AG04449 (cell line): ENCODE measurements at regions of chr5 and their contacts with region 1.

Region 1: GRCh38 chr5:73693481-73694061 is 67.6 kb downstream of the ARHGEF28 start:
- DNase-seq: no peak
- H3K4me3 ChIP-seq: no peak overlapping the region
- CTCF ChIP-seq: peak; percentile 52

Region 2: GRCh38 chr5:73250645-73251044 is 442.9 kb before region 1 on chr5:
- CTCF ChIA-PET with region 1: no interaction called
- POLR2A ChIA-PET with region 1: no interaction called
- DNase-seq: no peak
- H3K4me3 ChIP-seq: no peak overlapping the region
- CTCF ChIP-seq: no peak

Region 3: DNA sequence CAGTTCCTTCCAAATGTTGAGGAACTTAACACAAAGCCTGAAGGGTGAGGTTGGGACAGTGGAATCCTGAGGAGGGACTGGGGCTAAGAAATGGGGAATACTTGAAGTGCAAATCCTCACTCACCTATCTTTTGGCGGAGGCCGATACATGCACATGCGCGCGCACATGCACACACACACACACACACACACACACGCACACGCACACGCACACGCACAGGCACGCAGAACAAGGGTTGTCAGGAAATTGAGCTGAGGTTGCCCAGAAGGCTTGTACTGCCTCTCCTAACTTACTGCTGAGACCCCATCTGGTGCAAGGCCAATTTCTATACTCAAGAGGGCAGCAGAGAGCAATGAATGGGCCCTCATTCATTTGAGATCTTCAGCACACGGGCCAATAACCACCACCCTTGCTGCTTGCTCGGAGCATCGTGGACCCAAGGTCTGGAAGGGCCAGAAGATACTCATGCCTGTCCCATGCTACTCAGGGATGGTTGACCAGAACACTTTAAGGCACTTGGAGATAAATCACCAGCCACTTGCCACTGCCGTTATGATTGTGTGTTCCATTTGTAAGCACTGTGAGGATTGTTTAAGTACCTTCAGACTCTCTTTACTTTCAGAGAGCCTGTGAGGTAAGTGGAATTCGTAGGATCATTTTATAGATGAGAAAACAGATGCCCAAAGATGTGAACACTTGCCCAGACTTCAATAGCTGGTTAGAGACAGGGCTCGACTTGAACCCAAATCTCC is 173.9 kb before region 1 on chr5:
- CTCF ChIA-PET with region 1: no interaction called
- POLR2A ChIA-PET with region 1: no interaction called
- DNase-seq: no peak
- H3K4me3 ChIP-seq: no peak overlapping the region; the same call in 1 of the 2 replicates
- CTCF ChIP-seq: peak; percentile 87

Region 4: DNA sequence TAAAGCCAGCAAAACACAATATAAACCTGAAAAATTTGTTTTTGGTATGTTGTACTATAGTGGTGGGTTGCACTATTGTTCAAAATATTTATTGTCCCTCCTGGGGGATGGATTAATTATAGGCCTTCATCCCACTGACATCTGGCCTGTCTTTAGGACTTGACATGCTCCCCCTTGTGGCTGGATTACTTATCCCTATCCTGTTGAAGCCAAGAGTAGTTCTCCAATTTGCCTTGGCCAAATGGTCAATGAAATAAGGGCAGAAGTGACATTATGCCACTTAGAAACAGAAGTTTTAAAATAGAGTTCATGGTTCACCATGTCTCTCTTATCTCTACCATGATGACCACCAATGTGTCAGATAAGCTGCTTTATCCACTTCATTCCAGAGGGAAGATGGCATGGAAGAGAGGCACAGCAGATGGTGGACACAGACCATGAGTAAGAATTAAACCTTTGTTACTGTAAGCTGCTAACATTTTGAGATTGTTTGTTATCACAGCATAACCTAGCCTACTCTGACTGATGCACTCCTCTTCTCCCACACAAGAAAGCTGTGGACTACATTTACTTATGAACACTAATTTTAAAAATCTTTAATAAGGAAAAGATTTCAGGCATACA is 96.8 kb before region 1 on chr5:
- CTCF ChIA-PET with region 1: interaction called, 91 read pairs
- POLR2A ChIA-PET with region 1: no interaction called
- DNase-seq: no peak
- H3K4me3 ChIP-seq: no peak overlapping the region
- CTCF ChIP-seq: peak; percentile 17

Region 5: GRCh38 chr5:73649926-73650325 is 43.6 kb before region 1 on chr5:
- CTCF ChIA-PET with region 1: interaction called, 10 read pairs
- POLR2A ChIA-PET with region 1: no interaction called
- DNase-seq: no peak
- H3K4me3 ChIP-seq: no peak overlapping the region
- CTCF ChIP-seq: no peak

Region 6: GRCh38 chr5:73674669-73675004 is 18.9 kb before region 1 on chr5:
- CTCF ChIA-PET with region 1: interaction called, 10 read pairs
- POLR2A ChIA-PET with region 1: interaction called, 3 read pairs
- DNase-seq: no peak
- H3K4me3 ChIP-seq: no peak overlapping the region
- CTCF ChIP-seq: no peak

Region 7: DNA sequence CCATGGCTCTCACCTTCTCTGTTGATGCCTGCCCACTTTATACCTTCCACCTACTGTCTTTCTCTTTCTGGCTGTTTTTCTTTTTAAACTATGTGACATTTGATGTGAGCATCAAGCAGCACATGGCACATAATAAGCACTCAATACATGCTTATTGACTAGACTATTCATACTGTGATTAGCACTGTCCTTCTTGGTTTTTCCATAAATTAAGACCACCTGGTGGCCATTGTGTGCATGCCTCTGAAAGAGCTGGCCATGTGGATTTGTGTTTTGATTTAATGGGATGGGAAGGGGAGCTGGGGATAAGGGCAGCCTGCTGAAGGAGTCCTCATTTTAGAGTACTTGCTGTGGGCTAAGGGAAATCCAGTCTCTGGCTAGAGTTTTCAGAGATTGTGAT is 11.8 kb after region 1 on chr5:
- CTCF ChIA-PET with region 1: interaction called, 16 read pairs
- POLR2A ChIA-PET with region 1: no interaction called
- DNase-seq: no peak
- H3K4me3 ChIP-seq: no peak overlapping the region
- CTCF ChIP-seq: no peak

Region 8: DNA sequence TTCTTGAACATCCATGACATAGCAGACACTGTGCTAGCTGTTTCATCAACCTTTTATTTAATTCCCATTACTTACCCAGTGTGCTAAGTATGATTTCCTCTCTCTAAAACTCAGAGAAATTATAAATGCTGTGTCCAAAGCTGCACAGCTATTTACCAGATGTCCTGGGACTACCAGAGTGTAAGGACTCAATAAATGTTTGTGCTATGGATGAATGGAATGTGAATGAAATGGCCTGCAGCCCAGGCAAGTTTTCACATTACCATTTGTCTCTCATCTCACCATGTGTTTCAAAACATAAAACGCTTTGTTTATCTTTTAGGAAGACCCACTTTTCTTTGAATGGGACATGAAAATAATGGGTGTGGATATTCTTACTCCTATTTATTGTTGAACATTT is 28.7 kb after region 1 on chr5:
- CTCF ChIA-PET with region 1: interaction called, 10 read pairs
- POLR2A ChIA-PET with region 1: no interaction called
- DNase-seq: no peak
- H3K4me3 ChIP-seq: no peak overlapping the region
- CTCF ChIP-seq: no peak

Region 9: GRCh38 chr5:73808911-73809310 is 115.3 kb after region 1 on chr5:
- CTCF ChIA-PET with region 1: no interaction called
- POLR2A ChIA-PET with region 1: no interaction called
- DNase-seq: no peak
- H3K4me3 ChIP-seq: no peak overlapping the region
- CTCF ChIP-seq: no peak

Region 10: GRCh38 chr5:74056789-74057164 is 363.2 kb after region 1 on chr5:
- CTCF ChIA-PET with region 1: no interaction called
- POLR2A ChIA-PET with region 1: no interaction called
- DNase-seq: no peak
- H3K4me3 ChIP-seq: no peak overlapping the region
- CTCF ChIP-seq: peak; percentile 47